Gastrocnemius medialis (tissue), 4 donors: ENCODE measurements at regions of chr22 and their contacts with region 1.

Region 1: DNA sequence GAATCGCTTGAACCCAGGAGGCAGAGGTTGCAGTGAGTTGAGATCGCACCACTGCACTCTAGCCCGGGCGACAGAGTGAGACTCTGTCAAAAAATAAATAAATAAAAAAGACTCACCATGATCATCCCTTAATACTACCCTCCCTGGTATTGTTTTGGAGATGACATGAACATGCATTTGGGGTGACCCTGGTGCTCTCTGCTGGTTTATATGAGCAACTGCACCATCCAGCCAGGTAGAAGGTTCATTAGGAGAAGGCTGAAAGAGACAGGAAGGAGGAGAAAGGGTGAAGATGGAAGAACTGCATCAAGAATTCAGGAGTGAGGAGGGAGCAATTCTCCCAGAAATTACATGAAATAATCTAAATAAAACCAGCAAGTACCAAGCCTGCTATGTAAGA is 37.8 kb downstream of the SLC5A1 start:
- DNase-seq: peak in 1 of 2 donors; percentile 25
- ATAC-seq: peak; percentile 75 to 77
- H3K4me3 ChIP-seq: no peak overlapping the region
- H3K27ac ChIP-seq: no peak overlapping the region
- H3K4me1 ChIP-seq: peaks cover 20 to 22% of the 10 kb centered on the region in 2 donors
- H3K27me3 ChIP-seq: no peaks in the 10 kb centered on the region
- CTCF ChIP-seq: peak; percentile 66 to 75 (median 70)
- POLR2A ChIP-seq: no peak

Region 2: GRCh38 chr22:31970490-31971444 is 110.1 kb before region 1 on chr22:
- in situ Hi-C with region 1: loop called (anchors 5 to 10 kb)
- intact Hi-C with region 1: loop called (anchors 1 kb)
- DNase-seq: peak; percentile 39 to 65
- ATAC-seq: peak; percentile 94
- H3K4me3 ChIP-seq: peak overlapping the region; percentile 41 to 52 (median 46)
- H3K27ac ChIP-seq: no peak overlapping the region
- H3K4me1 ChIP-seq: peaks cover 0 to 11% of the 10 kb centered on the region in 2 donors
- H3K27me3 ChIP-seq: no peaks in the 10 kb centered on the region
- CTCF ChIP-seq: peak; percentile 82 to 96 (median 88)
- POLR2A ChIP-seq: no peak

Region 3: DNA sequence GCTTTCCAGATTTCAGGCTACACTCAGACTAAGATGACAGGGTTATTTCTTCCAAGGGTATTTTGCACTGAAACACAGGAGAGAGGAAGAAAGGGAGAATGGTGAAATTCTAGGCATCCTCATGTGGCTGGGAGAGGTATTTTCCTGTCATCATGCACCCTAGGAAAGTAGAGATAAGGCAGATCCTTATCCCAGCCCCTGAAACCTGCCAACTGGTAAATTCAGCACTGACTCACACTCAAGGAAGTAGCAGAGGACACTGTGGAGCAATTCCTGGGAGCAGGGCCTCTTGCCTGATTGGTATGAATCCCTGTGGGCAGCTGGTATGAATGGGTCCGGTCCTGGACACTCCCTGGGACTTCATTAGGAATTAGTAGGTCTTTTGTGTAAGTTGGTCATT is 75.5 kb before region 1 on chr22:
- in situ Hi-C with region 1: no loop called
- intact Hi-C with region 1: loop called (anchors 2 kb)
- DNase-seq: no peak
- ATAC-seq: no peak
- H3K4me3 ChIP-seq: no peak overlapping the region
- H3K27ac ChIP-seq: no peak overlapping the region
- H3K4me1 ChIP-seq: no peaks in the 10 kb centered on the region
- H3K27me3 ChIP-seq: peaks cover 0 to 5% (median 0%) of the 10 kb centered on the region in 3 donors
- CTCF ChIP-seq: no peak
- POLR2A ChIP-seq: no peak

Region 4: DNA sequence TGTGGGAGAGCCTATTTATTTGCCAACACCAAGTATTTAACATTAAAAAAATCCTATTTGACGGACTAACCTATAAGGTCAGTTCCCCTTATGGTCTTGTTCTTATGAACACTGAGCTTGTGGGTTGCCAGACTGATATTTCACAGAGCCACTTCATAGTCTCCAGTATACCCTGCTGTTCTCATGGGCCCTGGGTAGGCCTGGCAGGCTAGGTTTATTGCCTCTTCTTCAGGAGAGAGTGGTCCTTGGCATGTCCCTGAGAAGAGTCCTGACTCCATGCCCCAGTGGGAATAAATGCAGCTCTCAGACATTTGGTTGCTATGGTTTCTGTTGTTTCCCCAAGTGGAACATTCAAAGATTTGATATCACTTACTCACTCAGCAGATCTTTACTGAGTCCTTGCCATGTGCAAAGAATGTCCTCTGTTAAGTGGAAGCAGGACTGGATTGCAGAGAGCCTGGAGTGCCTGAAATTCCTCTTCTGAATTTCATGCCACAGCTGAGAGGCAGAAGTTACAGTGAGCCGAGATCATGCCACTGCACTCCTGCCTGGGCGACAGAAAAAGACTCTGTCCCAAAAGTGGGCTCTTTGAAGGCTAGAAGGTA is 22.1 kb before region 1 on chr22:
- in situ Hi-C with region 1: no loop called
- intact Hi-C with region 1: no loop called
- DNase-seq: no peak
- ATAC-seq: no peak
- H3K4me3 ChIP-seq: no peak overlapping the region
- H3K27ac ChIP-seq: no peak overlapping the region
- H3K4me1 ChIP-seq: peaks cover 13 to 18% of the 10 kb centered on the region in 2 donors
- H3K27me3 ChIP-seq: no peaks in the 10 kb centered on the region
- CTCF ChIP-seq: no peak
- POLR2A ChIP-seq: no peak